ENCODE measurements at regions of chr14 and their contacts with region 1.

Region 1: DNA sequence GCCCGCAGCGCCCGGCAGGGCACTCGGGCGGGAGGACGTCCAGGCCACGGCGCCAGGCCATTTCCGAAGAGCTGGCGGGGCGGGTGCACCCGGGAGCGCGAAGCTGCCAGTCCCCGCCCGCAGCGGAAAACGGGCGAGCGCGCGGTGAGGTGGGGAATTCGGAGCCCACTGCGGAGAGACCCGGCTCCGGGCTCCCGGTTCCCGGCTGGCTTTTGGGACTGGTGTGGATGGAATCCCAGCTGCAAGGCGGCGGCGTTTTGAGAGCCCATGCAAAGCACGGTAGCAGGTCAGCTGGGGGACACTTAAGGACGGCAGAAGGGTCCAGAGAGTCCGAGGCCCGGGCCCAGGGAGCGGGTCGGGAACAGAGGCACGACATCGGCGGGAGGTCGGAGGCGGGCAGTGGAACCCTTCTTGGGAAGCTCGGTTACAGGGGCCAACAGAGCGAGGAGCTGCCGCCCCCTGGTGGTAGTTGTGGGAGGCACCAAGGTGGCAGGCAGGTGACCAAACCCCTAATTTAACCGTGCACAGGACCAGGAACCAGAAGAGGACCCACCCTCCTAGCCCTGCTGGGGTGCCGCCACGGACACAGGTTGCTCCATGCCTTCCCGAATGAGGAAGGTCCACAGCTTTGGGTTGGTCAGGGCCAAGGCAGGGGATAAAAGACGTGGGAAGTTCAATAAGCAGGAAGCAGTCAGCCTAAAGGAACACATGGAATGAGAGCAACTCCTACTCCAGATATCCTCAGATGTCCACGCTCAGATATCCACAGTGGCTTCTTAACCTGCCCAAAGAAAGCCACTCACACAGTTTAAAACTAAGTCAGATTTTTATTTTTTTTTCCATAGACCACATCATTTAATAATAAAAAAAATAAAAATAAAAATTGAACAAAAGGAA is 685 bp upstream of the CDH24 start:
- DNase-seq: peak; percentile 93
- H3K4me3 ChIP-seq: peak overlapping the region; percentile 76
- H3K27ac ChIP-seq: peak overlapping the region; percentile 77
- H3K4me1 ChIP-seq: peaks cover 27% of the 10 kb centered on the region
- H3K27me3 ChIP-seq: no peaks in the 10 kb centered on the region
- CTCF ChIP-seq: peak; percentile 98

Region 2: DNA sequence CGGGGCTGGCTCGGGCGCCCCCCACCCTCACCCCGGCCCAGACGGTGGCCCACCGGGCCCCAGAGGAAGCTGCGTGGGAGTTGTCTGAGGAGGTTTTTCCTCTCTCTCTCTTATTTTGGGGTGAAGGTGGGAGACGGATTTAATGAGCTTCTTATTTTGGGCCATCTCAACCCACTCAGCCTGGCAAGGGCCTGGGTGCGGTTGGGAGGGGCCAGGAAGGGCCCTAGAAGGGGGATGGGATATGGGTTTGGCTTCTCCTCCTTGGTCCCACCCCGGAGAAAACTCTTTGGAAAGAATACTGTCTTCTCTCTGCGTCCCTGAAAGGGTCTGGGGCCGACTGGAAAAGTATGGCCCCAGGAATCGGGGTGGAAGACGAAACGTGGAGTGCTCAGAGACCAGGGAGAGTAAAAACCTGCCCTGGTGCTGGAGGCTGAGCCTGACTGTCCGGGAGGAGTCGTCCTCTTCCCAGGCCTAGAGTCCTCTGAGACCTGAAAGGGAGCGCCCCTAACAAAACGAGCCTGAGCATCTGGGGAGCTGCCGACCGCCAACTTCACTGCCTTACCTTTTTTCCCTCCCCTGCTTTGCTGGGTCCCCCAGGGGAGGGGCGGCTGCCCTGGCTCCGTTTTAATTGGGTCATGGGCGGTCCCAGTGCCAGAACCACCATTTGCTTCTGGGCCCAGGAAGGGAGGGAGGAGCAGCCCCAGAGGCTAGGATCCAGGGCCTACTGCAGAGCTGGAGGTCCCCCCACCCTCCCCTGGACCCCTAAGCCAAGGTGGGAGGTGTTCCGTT is 220.1 kb before region 1 on chr14:
- CTCF ChIA-PET with region 1: interaction called, 11 read pairs
- POLR2A ChIA-PET with region 1: no interaction called
- intact Hi-C with region 1: no loop called
- DNase-seq: peak; percentile 55
- H3K4me3 ChIP-seq: peak overlapping the region; percentile 79
- H3K27ac ChIP-seq: peak overlapping the region; percentile 89
- H3K4me1 ChIP-seq: peaks cover 20% of the 10 kb centered on the region
- H3K27me3 ChIP-seq: no peaks in the 10 kb centered on the region
- CTCF ChIP-seq: no peak

Measured in A673 (cell line).